Left ventricle myocardium inferior (tissue), 1 donor: ENCODE measurements at regions of chr5 and their contacts with region 1.

Region 1: DNA sequence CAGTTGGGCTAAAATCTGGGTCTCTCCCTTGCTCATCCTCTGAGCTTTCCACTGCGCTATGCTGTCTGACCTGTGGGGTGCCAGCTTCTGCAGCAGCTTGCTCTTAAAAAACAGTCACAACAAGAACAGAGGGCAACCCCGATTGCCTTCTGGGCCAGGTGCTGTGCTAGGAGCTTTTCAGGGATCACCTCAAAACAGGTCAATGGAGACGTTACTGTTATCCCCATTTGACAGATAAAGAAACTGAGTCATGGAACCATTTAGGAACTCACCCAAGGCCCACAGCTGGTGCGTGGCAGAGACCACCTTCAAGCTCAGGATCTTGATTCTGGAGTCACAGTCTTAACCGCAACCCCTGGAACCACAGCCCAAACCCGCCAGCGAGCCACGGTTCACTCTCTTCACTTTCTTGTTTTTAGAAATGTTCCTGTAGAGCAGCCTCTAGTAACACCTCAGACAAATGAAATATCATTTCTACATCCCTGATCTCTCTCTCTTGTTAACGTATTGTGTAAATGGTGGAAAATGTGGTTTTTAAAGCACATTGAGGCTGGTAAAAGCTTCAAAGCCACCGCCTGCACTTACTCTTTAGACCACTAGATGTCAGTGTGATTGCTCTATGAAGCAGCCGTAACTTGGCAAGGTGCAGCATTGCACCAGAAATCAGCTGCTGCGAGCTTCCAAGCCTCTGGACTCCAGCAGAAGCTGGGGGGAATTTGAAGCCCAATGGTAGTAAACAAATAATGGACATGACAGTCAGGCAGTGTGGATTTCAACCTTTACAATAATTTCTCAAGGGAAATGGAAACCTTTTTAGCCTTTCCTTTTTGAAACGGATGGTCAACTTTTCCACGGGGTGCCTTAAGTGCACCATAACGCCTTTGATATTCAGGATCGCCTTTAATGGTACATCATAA is 1.7 kb downstream of the FYB1 start:
- DNase-seq: peak; percentile 55
- H3K4me3 ChIP-seq: peak overlapping the region; percentile 39
- H3K27ac ChIP-seq: no peak overlapping the region
- H3K4me1 ChIP-seq: no peaks in the 10 kb centered on the region
- H3K27me3 ChIP-seq: peaks cover under 1% of the 10 kb centered on the region
- CTCF ChIP-seq: peak; percentile 98

Region 2: DNA sequence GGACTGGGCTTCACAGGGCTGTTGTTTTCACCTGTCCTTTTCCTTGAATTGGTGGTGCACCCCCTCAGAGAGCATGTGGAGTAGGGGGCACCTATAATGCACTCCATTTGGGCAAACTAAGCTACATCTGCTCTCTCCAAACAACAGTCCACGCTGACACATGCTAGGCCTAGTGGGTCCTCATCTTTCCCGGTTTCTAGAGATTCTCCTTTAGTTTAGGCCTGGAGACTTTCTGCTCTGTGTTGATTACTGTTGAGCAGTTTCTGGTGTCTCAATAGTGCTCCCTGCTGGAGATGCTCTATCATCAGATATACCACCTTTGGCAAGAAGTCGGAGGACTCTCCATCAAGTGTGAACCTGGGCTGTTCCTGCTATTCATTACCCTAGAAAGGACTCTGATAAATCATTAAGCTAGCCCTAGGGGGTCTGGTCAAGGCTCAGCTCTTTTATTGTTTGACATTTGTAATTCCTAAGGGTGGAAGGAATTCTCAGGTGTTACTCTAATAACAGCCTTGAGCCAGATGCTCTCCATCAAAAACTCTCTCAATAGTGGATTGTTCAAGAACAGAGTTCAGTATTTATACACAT is 65.7 kb after region 1 on chr5:
- intact Hi-C with region 1: loop called (anchors 5 kb)
- DNase-seq: no peak
- H3K4me3 ChIP-seq: no peak overlapping the region
- H3K27ac ChIP-seq: no peak overlapping the region
- H3K4me1 ChIP-seq: no peaks in the 10 kb centered on the region
- H3K27me3 ChIP-seq: peaks cover 8% of the 10 kb centered on the region
- CTCF ChIP-seq: peak; percentile 70

Region 3: DNA sequence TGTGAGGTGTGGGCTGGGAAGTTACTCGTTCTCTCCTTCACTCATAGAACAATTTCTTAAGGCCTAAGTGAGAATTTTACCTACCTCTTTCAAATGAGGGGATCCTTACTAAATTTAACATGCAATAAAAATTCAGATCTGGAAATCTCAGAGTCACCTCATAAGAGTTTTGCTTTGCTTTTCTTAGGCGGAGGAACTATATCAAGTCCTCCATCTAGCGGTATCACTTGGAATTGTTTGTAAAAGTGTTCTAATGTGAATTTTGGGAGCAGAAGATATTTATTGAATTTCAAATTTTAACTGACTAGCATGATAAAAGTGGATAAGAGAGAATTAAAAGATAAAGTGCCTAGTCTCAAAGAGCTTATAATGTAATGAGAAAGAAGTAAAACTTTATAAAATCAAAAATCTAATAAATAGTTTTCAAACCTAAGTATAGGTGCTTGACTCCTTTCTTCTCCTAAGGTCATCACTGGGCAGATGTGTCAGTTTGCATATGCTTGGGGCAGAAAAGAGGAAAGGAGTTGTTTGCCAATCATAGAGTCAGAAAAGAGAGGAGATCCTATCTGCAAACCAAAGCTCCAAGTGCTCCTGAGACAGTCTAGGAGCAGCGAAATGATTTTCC is 352.9 kb after region 1 on chr5:
- intact Hi-C with region 1: loop called (anchors 5 kb)
- DNase-seq: no peak
- H3K4me3 ChIP-seq: no peak overlapping the region
- H3K27ac ChIP-seq: no peak overlapping the region
- H3K4me1 ChIP-seq: no peaks in the 10 kb centered on the region
- H3K27me3 ChIP-seq: peaks cover 13% of the 10 kb centered on the region
- CTCF ChIP-seq: peak; percentile 75